ENCODE measurements at regions of chr11 and their contacts with region 1.

Region 1: GRCh38 chr11:121112498-121113455 is 11.7 kb downstream of the TECTA start:
- DNase-seq: peak; percentile 50 to 76 (median 62)
- ATAC-seq: peak; percentile 77 to 95 (median 90)
- H3K4me3 ChIP-seq: no peak overlapping the region
- H3K27ac ChIP-seq: no peak overlapping the region
- H3K4me1 ChIP-seq: peaks cover 0 to 11% (median 2%) of the 10 kb centered on the region in 12 donors
- H3K27me3 ChIP-seq: no peaks in the 10 kb centered on the region
- CTCF ChIP-seq: peak; percentile 43 to 75 (median 61)
- POLR2A ChIP-seq: no peak

Region 2: GRCh38 chr11:120500414-120501071 is 612.2 kb before region 1 on chr11:
- intact Hi-C with region 1: loop called in 1 of 10 experiments (anchors 10 kb)
- DNase-seq: peak in 3 of 5 donors; percentile 30 to 58 (median 32)
- ATAC-seq: peak in 3 of 4 donors; percentile 47 to 64 (median 56)
- H3K4me3 ChIP-seq: no peak overlapping the region
- H3K27ac ChIP-seq: no peak overlapping the region
- H3K4me1 ChIP-seq: peaks cover 0 to 12% (median 0%) of the 10 kb centered on the region in 12 donors
- H3K27me3 ChIP-seq: peaks cover 0 to 23% (median 0%) of the 10 kb centered on the region in 9 donors
- CTCF ChIP-seq: no peak
- POLR2A ChIP-seq: no peak

Region 3: DNA sequence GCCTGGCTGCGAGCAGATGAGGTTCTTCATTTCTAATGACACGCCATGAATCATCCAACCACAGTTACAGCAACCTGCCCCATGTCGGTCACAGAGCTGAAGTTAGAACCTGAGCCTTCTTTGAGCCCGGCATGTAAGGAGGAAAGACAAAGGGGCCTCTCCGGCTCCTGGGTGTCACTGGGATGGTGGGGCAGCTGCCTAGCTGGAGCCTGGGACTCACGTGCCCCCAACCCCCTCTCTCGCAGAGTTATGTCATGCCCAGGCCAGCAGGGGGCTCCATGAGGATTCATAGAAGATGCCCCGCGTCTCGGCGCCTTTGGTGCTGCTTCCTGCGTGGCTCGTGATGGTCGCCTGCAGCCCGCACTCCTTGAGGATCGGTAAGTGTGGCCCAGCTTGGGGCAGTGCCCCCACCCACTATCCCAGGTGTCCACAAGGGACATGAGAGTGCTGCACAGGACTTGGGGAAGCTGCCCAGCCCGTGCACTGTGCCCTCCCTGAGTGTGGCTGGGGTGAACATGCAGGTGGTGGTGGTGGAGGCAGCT is 452.7 kb before region 1 on chr11:
- intact Hi-C with region 1: loop called in 1 of 10 experiments (anchors 10 kb)
- DNase-seq: no peak
- ATAC-seq: peak in 1 of 4 donors; percentile 31
- H3K4me3 ChIP-seq: no peak overlapping the region
- H3K27ac ChIP-seq: no peak overlapping the region
- H3K4me1 ChIP-seq: no peaks in the 10 kb centered on the region
- H3K27me3 ChIP-seq: peaks cover 0 to 32% (median 4%) of the 10 kb centered on the region in 9 donors
- CTCF ChIP-seq: peak in 11 of 12 donors; percentile 17 to 42 (median 33)
- POLR2A ChIP-seq: no peak

Region 4: GRCh38 chr11:120929664-120930154 is 183.1 kb before region 1 on chr11:
- intact Hi-C with region 1: loop called in 4 of 10 experiments (anchors 2 to 10 kb)
- DNase-seq: peak in 3 of 5 donors; percentile 22 to 44 (median 39)
- ATAC-seq: peak in 3 of 4 donors; percentile 69 to 75 (median 72)
- H3K4me3 ChIP-seq: no peak overlapping the region
- H3K27ac ChIP-seq: no peak overlapping the region
- H3K4me1 ChIP-seq: no peaks in the 10 kb centered on the region
- H3K27me3 ChIP-seq: peaks cover 0 to 13% (median 0%) of the 10 kb centered on the region in 9 donors
- CTCF ChIP-seq: peak in 11 of 12 donors; percentile 28 to 66 (median 49)
- POLR2A ChIP-seq: no peak

Region 5: DNA sequence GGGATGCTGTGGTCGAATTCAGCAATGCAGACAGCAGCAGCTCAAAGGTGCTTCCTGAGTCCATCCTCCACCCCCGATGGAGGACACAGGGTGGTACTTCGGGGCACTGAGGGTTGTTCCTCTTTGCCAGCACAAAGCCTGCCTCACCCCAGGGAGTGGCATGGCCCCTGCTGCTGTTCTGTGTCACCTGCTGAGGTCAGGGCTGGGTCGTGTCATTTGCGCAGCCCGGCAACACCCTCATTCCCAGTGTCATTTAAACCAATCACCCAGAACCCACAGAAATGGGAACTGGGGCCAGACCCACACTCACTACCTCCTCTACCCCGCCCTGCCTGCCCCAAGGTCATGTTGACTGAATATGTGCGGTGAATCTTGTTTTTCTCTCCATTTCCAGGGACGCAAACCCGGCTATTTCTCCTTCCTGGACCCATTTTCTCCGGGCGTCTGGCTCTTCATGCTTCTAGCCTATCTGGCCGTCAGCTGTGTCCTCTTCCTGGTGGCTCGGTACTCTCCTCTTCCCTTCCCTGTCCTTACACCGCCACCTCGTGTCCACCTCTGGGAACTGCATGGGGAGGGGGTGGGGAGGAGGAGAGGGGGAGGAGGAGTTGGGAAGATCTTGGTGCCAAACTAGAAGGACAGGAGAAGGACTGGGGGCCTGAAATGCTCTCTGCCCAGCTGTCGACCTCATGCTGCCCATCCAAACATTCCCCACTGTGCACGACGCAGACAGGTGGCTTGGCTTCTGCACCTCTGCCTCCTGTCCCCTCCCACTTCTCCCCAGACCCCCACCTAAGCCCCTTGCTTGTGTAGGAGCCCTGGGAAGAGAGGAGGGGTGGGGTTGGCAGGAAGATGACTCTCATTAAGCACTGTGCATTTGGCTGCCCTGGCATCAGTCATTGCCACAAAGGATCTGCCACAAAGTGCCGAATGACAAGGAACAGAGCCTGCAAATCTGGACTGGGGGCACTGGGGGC is 160.0 kb before region 1 on chr11:
- intact Hi-C with region 1: loop called in 4 of 10 experiments (anchors 10 kb)
- DNase-seq: peak; percentile 70 to 89 (median 72)
- ATAC-seq: peak; percentile 75 to 96 (median 92)
- H3K4me3 ChIP-seq: peak overlapping the region in 6 of 12 donors; percentile 9 to 38 (median 26)
- H3K27ac ChIP-seq: peak overlapping the region in 3 of 12 donors; percentile 28 to 39 (median 38)
- H3K4me1 ChIP-seq: peaks cover 0 to 12% (median 3%) of the 10 kb centered on the region in 12 donors
- H3K27me3 ChIP-seq: peaks cover 0 to 20% (median 3%) of the 10 kb centered on the region in 9 donors
- CTCF ChIP-seq: peak; percentile 47 to 81 (median 68)
- POLR2A ChIP-seq: no peak

Region 6: DNA sequence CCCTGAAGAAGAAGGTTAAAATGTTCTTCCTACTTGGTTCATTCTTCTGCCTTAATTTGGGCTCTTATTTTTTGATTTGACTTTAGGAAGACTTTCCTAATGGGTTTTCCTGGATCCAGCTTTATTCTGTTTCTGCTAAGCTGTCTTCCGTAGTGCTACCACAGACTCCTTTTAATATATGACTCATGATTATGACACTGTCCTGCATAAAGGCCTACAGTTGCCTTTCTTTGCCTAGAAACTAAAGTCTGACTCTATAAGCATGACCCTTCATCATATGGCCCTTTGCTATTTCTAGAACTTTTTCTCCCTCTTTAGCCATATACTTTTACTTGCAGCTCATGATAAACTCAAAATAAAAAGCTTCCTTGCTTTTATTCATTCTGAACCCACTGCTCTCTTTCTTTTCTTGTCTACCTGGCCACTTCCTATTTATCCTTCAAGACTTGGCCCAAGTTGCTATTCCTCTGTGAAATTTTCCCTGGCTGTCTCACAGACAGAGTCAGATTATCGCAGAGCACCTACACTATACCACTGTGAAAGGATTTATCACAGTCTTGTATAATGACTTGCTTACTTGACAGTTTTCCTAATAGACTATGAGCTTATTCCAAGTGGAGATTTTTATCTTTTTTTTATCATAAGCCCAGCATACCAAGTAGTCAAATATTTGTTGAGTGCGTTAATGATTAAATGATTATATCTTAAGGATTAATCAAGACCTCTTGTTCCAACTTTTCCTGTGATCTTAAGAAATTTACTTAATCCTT is 64.1 kb before region 1 on chr11:
- intact Hi-C with region 1: no loop called
- DNase-seq: no peak
- ATAC-seq: no peak
- H3K4me3 ChIP-seq: no peak overlapping the region
- H3K27ac ChIP-seq: no peak overlapping the region
- H3K4me1 ChIP-seq: no peaks in the 10 kb centered on the region
- H3K27me3 ChIP-seq: no peaks in the 10 kb centered on the region
- CTCF ChIP-seq: no peak
- POLR2A ChIP-seq: no peak